BJ (cell line): ENCODE measurements at regions of chr19 and their contacts with region 1.

Region 1: DNA sequence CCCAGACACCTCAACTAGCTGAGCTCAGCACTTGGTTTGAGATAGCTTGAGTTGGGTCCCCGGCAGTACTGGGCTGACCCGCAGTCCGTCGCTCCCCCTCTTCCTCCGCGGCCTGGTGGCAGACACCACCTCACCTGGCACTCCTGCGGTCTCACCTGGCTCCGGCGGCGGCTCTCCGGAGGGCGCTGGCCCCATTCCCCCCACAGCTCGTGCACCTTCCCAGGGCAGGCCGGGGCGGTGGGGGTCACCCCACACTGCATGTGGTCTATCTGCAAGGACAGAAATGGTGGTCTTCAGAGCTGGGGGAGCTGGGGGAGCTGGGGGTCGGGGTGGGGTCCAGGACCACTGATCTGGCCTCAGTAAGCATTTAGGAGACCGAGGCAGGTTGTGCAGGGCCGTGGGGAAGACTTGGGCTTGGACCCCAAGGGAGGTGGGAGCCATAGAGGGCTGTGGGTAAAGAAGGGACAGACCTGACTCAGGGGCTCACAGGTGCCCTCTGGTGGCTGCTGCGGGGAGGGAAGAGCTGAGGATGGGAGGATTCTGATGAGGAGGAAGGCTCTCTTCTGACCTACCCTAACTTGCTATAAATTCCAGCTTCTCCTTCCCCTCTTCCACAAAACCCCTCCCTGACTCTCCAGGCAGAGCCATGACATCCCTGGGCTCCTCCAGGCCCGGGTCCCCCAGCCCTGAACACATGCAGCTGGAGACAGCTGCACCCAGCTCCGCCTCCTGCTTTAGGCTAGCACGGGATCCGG is 6.7 kb upstream of the PLIN4 start:
- DNase-seq: no peak
- H3K4me3 ChIP-seq: no peak overlapping the region
- H3K27me3 ChIP-seq: peaks cover 5% of the 10 kb centered on the region
- CTCF ChIP-seq: peak; percentile 89

Region 2: GRCh38 chr19:4267101-4267900 is 257.7 kb before region 1 on chr19:
- CTCF ChIA-PET with region 1: interaction called, 43 read pairs
- POLR2A ChIA-PET with region 1: no interaction called
- DNase-seq: no peak
- H3K4me3 ChIP-seq: no peak overlapping the region
- H3K27me3 ChIP-seq: no peaks in the 10 kb centered on the region
- CTCF ChIP-seq: peak; percentile 88

Region 3: GRCh38 chr19:4505897-4506744 is 18.9 kb before region 1 on chr19:
- CTCF ChIA-PET with region 1: interaction called, 10 read pairs
- POLR2A ChIA-PET with region 1: no interaction called
- DNase-seq: no peak
- H3K4me3 ChIP-seq: no peak overlapping the region
- H3K27me3 ChIP-seq: no peaks in the 10 kb centered on the region
- CTCF ChIP-seq: no peak

Region 4: DNA sequence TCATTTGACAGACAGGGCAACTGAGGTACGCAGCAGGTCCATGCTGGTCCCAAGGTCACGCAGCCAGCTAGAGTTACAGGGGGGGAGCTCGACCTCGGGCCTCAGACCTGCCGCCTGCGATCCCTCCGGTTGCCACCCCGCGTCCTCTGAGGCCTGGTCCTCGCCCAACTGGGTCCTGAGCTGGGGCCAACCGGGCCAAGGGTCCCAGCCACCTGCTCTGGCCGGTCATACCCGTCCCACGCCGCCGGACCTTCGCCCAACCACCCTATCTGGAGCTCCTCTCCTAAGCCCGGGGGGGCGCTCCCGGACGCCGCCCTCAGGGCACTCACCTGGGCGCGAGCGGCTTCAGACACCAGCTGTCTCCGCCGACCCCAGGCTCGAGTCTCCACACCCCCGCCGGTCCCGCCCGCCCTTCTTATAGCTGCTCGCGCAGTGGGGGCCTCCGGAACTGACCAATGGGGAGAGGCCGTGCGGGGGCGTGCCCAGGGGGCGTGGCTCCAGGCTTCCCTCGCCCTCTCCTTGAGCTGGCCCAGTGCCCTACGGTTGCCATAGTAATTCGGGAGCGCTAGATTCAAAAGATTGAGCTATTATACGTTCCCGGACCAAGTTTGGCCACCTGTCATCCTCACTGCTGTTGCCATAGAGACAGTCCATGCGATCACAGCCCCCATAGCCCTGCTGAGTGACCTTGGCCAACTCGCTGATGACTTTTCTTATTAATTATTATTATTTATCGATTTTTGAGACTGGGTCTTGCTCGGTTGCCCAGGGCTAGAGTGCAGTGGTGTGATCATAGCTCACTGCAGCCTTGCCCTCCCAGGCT is 10.1 kb after region 1 on chr19 and contains the start of gene PLIN5:
- CTCF ChIA-PET with region 1: interaction called, 84 read pairs
- POLR2A ChIA-PET with region 1: no interaction called
- DNase-seq: no peak
- H3K4me3 ChIP-seq: no peak within 1 kb of the TSS; the same call in 1 of the 2 replicates
- H3K27me3 ChIP-seq: peaks cover 7% of the 10 kb centered on the region
- CTCF ChIP-seq: no peak
- polyA plus RNA-seq, gene PLIN5: not detected in 2 replicates

Region 5: GRCh38 chr19:4633140-4633967 is 108.4 kb after region 1 on chr19:
- CTCF ChIA-PET with region 1: interaction called, 18 read pairs
- POLR2A ChIA-PET with region 1: no interaction called
- DNase-seq: no peak
- H3K4me3 ChIP-seq: no peak overlapping the region
- H3K27me3 ChIP-seq: no peaks in the 10 kb centered on the region
- CTCF ChIP-seq: peak; percentile 90

Region 6: DNA sequence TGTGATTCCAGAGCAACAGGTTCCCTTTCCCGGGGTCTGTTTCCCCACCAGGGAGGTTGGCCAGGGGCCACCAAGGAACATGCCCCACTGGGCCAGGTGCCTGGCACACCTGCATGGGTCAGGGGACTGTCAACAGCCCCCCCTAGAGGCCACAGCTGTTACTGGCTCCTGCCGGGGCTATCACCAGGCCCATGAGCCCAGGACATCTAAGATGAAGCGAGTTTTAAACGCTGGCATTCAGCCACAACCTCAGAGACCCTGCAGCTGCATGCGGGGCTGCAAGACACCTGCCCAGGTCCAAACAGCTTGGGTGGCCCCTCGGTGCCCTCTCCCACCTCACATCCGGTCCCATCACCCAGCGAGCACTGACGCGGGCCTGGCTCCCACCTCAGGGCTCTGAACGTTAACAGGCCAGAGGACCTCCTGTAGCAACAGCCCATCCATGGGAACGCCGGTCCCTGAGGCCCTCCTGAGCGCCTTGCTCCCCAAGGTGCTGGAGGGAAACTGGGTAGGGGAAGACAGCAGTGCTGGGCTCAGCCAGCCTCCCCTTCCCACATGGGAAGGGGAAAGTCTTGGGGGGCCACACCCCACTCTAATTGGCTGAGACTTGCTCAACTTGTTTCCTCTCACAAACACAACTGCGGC is 1887.6 kb after region 1 on chr19:
- CTCF ChIA-PET with region 1: no interaction called
- POLR2A ChIA-PET with region 1: no interaction called
- DNase-seq: no peak
- H3K4me3 ChIP-seq: no peak overlapping the region
- H3K27me3 ChIP-seq: no peaks in the 10 kb centered on the region
- CTCF ChIP-seq: peak; percentile 59